Thyroid gland (tissue), 4 donors: ENCODE measurements at regions of chr10 and their contacts with region 1.

Region 1: GRCh38 chr10:121823993-121824463 is 103.8 kb downstream of the ATE1 start:
- DNase-seq: no peak
- H3K4me3 ChIP-seq: no peak overlapping the region
- H3K27ac ChIP-seq: no peak overlapping the region
- H3K4me1 ChIP-seq: no peaks in the 10 kb centered on the region
- H3K27me3 ChIP-seq: no peaks in the 10 kb centered on the region
- CTCF ChIP-seq: peak in 5 of 6 experiments; percentile 46 to 69 (median 64)
- POLR2A ChIP-seq: no peak

Region 2: DNA sequence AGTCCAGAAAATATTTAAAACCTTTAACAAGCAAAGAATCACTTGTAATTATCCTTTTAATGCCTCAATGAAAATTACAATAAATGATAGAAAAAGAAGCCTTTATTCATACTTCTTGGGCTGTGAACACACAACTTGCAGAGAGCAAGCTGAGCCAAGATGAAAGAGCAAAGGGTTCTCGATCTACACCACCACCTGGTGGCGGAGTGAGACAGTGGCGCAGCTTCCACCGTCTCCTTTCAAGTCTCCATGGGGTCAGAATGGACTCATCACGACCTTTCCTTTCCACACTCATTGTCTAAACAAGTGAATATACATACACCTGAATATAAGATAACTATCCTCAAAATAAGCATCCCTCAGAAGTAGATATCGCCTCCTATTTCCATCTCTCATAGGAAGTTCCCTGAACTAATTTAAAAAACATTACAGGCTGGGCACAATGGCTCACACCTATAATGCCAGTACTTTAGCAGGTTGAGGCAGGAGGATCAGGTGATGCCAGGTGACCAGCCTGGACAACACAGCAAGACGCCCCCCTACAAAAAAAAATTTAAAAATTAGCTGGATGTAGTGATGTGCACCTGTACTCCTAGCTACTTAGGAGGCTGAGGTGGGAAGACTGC is 63.1 kb after region 1 on chr10:
- intact Hi-C with region 1: loop called (anchors 10 kb)
- DNase-seq: peak; percentile 59 to 70
- H3K4me3 ChIP-seq: no peak overlapping the region
- H3K27ac ChIP-seq: no peak overlapping the region
- H3K4me1 ChIP-seq: no peaks in the 10 kb centered on the region
- H3K27me3 ChIP-seq: no peaks in the 10 kb centered on the region
- CTCF ChIP-seq: peak; percentile 42 to 83 (median 76)
- POLR2A ChIP-seq: no peak